Activated B cell treated with CpG ODN at 0.5 μM for 24 hours (primary cell): ENCODE measurements at regions of chr19 and their contacts with region 1.

Region 1: GRCh38 chr19:50922317-50922853 is 11.2 kb upstream of the KLK4 start:
- DNase-seq: peak; percentile 59
- ATAC-seq: peak; percentile 99
- H3K4me3 Mint-ChIP-seq: no peak overlapping the region
- H3K27ac Mint-ChIP-seq: no peak overlapping the region
- H3K4me1 Mint-ChIP-seq: peaks cover 10% of the 10 kb centered on the region
- H3K27me3 Mint-ChIP-seq: peaks cover 24% of the 10 kb centered on the region
- CTCF ChIP-seq: peak; percentile 61

Region 2: GRCh38 chr19:50537762-50538230 is 384.6 kb before region 1 on chr19:
- CTCF ChIA-PET with region 1: interaction called, 19 read pairs
- POLR2A ChIA-PET with region 1: no interaction called
- intact Hi-C with region 1: no loop called
- DNase-seq: peak; percentile 41
- ATAC-seq: no peak
- H3K4me3 Mint-ChIP-seq: no peak overlapping the region
- H3K27ac Mint-ChIP-seq: no peak overlapping the region
- H3K4me1 Mint-ChIP-seq: no peaks in the 10 kb centered on the region
- H3K27me3 Mint-ChIP-seq: peaks cover 16% of the 10 kb centered on the region
- CTCF ChIP-seq: no peak

Region 3: GRCh38 chr19:50705422-50706019 is 216.9 kb before region 1 on chr19:
- CTCF ChIA-PET with region 1: interaction called, 5 read pairs
- POLR2A ChIA-PET with region 1: no interaction called
- intact Hi-C with region 1: loop called (anchors 1 kb)
- DNase-seq: no peak
- ATAC-seq: peak; percentile 89
- H3K4me3 Mint-ChIP-seq: no peak overlapping the region
- H3K27ac Mint-ChIP-seq: no peak overlapping the region
- H3K4me1 Mint-ChIP-seq: peaks cover 3% of the 10 kb centered on the region
- H3K27me3 Mint-ChIP-seq: peaks cover 31% of the 10 kb centered on the region
- CTCF ChIP-seq: no peak

Region 4: DNA sequence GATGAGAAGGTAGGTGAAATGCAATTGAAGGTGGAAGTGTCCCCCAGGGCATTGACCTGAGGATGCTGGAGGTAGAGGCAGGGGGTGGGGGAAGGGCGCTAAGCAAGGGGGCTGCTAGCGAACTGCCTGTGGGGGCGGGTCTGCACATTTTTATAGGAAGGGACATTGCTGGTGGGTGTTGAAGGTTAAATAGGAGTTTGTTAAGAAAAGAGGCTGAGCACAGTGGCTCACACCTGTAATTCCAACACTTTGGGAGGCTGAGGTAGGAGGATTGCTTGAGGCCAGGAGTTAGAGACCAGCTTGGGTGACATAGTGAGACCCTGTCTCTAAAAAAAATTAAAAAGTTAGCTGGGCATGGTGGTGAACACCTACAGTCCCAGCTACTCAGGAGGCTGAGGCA is 137.7 kb before region 1 on chr19:
- CTCF ChIA-PET with region 1: interaction called, 19 read pairs
- POLR2A ChIA-PET with region 1: no interaction called
- intact Hi-C with region 1: no loop called
- DNase-seq: no peak
- ATAC-seq: no peak
- H3K4me3 Mint-ChIP-seq: no peak overlapping the region
- H3K27ac Mint-ChIP-seq: no peak overlapping the region
- H3K4me1 Mint-ChIP-seq: peaks cover 2% of the 10 kb centered on the region
- H3K27me3 Mint-ChIP-seq: peaks cover 26% of the 10 kb centered on the region
- CTCF ChIP-seq: no peak

Region 5: DNA sequence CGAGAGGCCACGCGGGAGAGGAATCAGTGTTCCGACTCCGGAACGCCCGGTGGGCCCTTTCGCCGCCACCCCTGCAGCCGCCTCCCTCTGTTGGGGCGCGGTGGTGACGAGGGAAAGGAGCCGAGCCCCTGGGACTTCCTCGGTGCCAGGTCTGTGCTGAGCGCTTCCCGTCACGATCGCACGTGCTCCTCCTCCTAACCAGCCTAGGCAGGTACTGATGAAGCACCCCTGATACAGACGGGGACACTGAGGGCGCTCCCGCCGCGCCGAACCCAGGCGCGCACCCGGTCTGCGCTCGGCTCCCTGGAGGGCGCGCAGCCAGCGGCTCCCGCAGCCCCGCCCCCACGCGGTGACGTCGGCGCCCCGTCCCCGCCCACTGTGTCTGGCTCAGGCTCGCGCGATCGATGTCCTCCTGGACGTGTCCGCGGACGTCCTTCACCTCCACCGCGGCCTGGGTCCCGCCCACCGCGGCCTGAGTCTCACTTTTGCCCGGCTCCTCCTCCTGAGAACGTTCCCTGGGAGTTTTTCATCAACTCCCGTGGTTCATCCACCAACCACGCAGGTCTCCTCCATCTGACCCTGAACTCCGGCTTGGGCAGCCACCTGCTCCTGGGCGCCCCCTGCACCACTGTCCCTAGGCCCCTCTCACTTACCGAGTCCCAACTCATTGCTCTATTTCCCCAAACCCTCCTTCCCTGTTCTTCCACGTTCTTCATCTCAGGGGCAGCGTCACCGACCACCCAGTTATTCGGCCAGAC is 86.4 kb before region 1 on chr19:
- CTCF ChIA-PET with region 1: interaction called, 4 read pairs
- POLR2A ChIA-PET with region 1: interaction called, 8 read pairs
- intact Hi-C with region 1: loop called (anchors 2 kb)
- DNase-seq: peak; percentile 80
- ATAC-seq: peak; percentile 94
- H3K4me3 Mint-ChIP-seq: peak overlapping the region; percentile 83
- H3K27ac Mint-ChIP-seq: peak overlapping the region; percentile 20
- H3K4me1 Mint-ChIP-seq: peaks cover 27% of the 10 kb centered on the region
- H3K27me3 Mint-ChIP-seq: peaks cover 36% of the 10 kb centered on the region
- CTCF ChIP-seq: no peak